Activated CD8-positive, alpha-beta T cell treated with anti-CD3 and anti-CD28 coated beads, Interleukin-2, amount 10 ng/mL, durations not matched to agents 7 days and 5 days (primary cell): ENCODE measurements at regions of chr15 and their contacts with region 1.

Region 1: GRCh38 chr15:63752075-63752684 is 81.6 kb downstream of the HERC1 start:
- DNase-seq: peak; percentile 66
- ATAC-seq: peak; percentile 69
- H3K4me3 Mint-ChIP-seq: no peak overlapping the region
- H3K27ac Mint-ChIP-seq: no peak overlapping the region
- H3K4me1 Mint-ChIP-seq: no peaks in the 10 kb centered on the region
- H3K27me3 Mint-ChIP-seq: no peaks in the 10 kb centered on the region

Region 2: DNA sequence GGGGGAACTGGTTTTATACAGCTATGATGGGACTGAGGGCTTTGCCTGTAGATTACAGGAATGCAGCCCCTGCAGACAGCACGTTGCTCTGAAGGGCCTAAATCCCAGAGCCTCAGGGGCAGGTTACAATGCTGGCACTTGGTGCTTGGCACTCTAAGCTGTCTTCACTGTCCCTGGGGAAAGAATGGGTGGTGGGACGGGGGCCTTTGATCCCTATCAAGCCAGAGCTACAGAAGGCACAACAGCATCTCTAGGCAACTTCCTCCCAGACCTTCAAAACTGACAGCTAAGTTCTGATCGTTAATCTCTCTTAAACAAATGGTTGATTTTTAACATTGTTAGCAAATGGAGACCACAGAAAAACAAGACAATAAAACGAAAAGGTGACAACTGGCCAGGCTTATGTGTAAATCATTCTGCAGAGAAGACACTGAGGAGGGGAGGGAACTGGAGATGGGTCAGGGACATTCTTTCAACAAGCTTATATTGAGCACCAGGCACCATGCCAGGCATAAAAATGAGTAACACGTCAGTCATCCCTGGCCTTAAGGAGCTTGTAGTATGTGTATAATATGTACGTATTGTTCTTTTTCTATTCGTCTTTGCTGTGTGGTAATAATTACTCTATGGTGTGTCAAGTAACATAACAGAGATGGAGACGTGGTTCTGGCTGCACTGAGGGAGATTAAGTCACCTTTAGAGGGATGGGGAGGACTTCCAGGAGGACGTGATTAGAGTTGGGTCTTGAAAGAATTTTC is 419.6 kb before region 1 on chr15:
- CTCF ChIA-PET with region 1: no interaction called
- POLR2A ChIA-PET with region 1: no interaction called
- DNase-seq: no peak
- ATAC-seq: no peak
- H3K4me3 Mint-ChIP-seq: no peak overlapping the region
- H3K27ac Mint-ChIP-seq: no peak overlapping the region
- H3K4me1 Mint-ChIP-seq: no peaks in the 10 kb centered on the region
- H3K27me3 Mint-ChIP-seq: no peaks in the 10 kb centered on the region

Region 3: GRCh38 chr15:63610200-63610841 is 141.9 kb before region 1 on chr15:
- CTCF ChIA-PET with region 1: interaction called, 31 read pairs
- POLR2A ChIA-PET with region 1: interaction called, 4 read pairs
- DNase-seq: peak; percentile 90
- ATAC-seq: peak; percentile 91
- H3K4me3 Mint-ChIP-seq: peak overlapping the region; percentile 12
- H3K27ac Mint-ChIP-seq: peak overlapping the region; percentile 94
- H3K4me1 Mint-ChIP-seq: peaks cover 46% of the 10 kb centered on the region
- H3K27me3 Mint-ChIP-seq: no peaks in the 10 kb centered on the region

Region 4: GRCh38 chr15:63805993-63806980 is 54.1 kb after region 1 on chr15:
- CTCF ChIA-PET with region 1: interaction called, 13 read pairs
- POLR2A ChIA-PET with region 1: no interaction called
- DNase-seq: no peak
- ATAC-seq: peak; percentile 23
- H3K4me3 Mint-ChIP-seq: no peak overlapping the region
- H3K27ac Mint-ChIP-seq: peak overlapping the region; percentile 65
- H3K4me1 Mint-ChIP-seq: peaks cover 60% of the 10 kb centered on the region
- H3K27me3 Mint-ChIP-seq: no peaks in the 10 kb centered on the region

Region 5: DNA sequence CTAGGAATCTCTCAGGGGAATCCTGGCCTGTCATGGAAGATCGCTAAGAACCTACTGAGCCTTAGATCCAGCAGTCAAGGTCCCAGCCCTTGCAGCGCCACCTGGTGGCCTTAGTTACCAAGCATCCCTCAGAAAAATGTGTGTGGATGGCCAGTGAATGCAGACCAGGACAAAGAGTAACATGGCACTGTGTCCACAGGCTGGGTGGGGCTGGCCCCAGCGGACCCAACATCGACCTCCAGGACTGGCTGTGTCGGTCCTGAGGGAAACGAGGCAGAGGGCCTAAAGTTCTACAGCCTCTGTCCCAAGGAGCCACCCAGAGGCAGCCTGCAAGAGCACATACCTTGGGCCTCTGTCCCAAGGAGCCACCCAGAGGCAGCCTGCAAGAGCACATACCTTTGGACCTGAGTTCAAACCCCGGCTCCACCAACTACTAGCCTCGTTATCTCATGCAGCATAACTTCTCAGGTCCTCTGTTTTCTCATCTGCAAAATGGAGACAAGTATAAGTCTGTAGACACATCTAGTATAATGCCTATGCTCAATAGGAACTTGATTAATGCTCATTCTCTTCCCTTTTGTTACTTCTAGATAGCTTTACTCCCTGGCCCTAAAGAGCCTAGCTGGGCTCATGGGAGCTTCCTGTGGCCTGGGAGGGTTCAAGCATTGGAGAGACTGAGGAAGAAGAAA is 139.0 kb after region 1 on chr15:
- CTCF ChIA-PET with region 1: interaction called, 130 read pairs
- POLR2A ChIA-PET with region 1: no interaction called
- DNase-seq: peak; percentile 80
- ATAC-seq: peak; percentile 28
- H3K4me3 Mint-ChIP-seq: peak overlapping the region; percentile 25
- H3K27ac Mint-ChIP-seq: peak overlapping the region; percentile 86
- H3K4me1 Mint-ChIP-seq: peaks cover 65% of the 10 kb centered on the region
- H3K27me3 Mint-ChIP-seq: no peaks in the 10 kb centered on the region

Region 6: DNA sequence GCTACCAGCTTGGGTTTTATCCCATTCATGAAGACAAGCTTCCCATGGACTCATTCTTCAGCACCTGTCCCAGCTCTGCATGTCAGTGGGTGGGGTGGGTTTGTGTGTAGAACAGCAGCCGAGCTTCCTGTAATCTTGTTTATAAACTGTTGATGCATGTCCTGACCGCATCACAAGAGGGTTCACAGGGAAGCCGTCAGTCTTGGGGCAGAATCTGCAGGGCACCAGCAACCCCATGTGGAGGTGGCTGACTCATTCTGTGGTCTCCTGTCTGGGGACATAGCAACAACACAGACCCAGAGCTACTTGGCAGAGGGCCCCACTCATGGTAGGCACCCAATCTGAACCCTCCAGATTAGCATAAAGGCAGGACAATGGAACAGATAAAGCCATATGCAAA is 258.5 kb after region 1 on chr15:
- CTCF ChIA-PET with region 1: interaction called, 54 read pairs
- POLR2A ChIA-PET with region 1: no interaction called
- DNase-seq: peak; percentile 92
- ATAC-seq: peak; percentile 100
- H3K4me3 Mint-ChIP-seq: peak overlapping the region; percentile 7
- H3K27ac Mint-ChIP-seq: peak overlapping the region; percentile 75
- H3K4me1 Mint-ChIP-seq: peaks cover 37% of the 10 kb centered on the region
- H3K27me3 Mint-ChIP-seq: peaks cover 5% of the 10 kb centered on the region

Region 7: GRCh38 chr15:64060716-64061115 is 308.5 kb after region 1 on chr15:
- CTCF ChIA-PET with region 1: interaction called, 102 read pairs
- POLR2A ChIA-PET with region 1: no interaction called
- DNase-seq: no peak
- ATAC-seq: no peak
- H3K4me3 Mint-ChIP-seq: no peak overlapping the region
- H3K27ac Mint-ChIP-seq: no peak overlapping the region
- H3K4me1 Mint-ChIP-seq: no peaks in the 10 kb centered on the region
- H3K27me3 Mint-ChIP-seq: no peaks in the 10 kb centered on the region